Colonic mucosa (tissue), 4 donors: ENCODE measurements at regions of chr1 and their contacts with region 1.

Region 1: GRCh38 chr1:145918144-145918992 is at the start of gene PEX11B:
- DNase-seq: peak; percentile 92
- H3K4me3 ChIP-seq: peak within 1 kb of the TSS; percentile 77
- H3K27ac ChIP-seq: peak within 1 kb of the TSS; percentile 84
- H3K4me1 ChIP-seq: peaks cover 6% of the 10 kb centered on the region
- H3K27me3 ChIP-seq: no peaks in the 10 kb centered on the region
- CTCF ChIP-seq: no peak
- total RNA-seq, gene PEX11B: 28.2 to 31.1 TPM

Region 2: GRCh38 chr1:145845514-145846161 is 72.7 kb before region 1 on chr1 and contains the start of gene NUDT17:
- intact Hi-C with region 1: loop called (anchors 10 kb)
- DNase-seq: peak; percentile 80
- H3K4me3 ChIP-seq: peak within 1 kb of the TSS; percentile 43
- H3K27ac ChIP-seq: peak within 1 kb of the TSS; percentile 10
- H3K4me1 ChIP-seq: peaks cover 10% of the 10 kb centered on the region
- H3K27me3 ChIP-seq: no peaks in the 10 kb centered on the region
- CTCF ChIP-seq: peak; percentile 97
- total RNA-seq, gene NUDT17: 0.69 to 0.82 TPM

Region 3: GRCh38 chr1:145957443-145958319 is 39.3 kb after region 1 on chr1 and contains the start of gene LIX1L:
- intact Hi-C with region 1: loop called (anchors 5 kb)
- DNase-seq: peak; percentile 96
- H3K4me3 ChIP-seq: peak within 1 kb of the TSS; percentile 74
- H3K27ac ChIP-seq: peak within 1 kb of the TSS; percentile 90
- H3K4me1 ChIP-seq: peaks cover 13% of the 10 kb centered on the region
- H3K27me3 ChIP-seq: peaks cover 25% of the 10 kb centered on the region
- CTCF ChIP-seq: no peak
- total RNA-seq, gene LIX1L: 4.7 to 8.6 TPM